Activated CD8-positive, alpha-beta T cell treated with anti-CD3 and anti-CD28 coated beads for 36 hours (primary cell): ENCODE measurements at regions of chr11 and their contacts with region 1.

Region 1: DNA sequence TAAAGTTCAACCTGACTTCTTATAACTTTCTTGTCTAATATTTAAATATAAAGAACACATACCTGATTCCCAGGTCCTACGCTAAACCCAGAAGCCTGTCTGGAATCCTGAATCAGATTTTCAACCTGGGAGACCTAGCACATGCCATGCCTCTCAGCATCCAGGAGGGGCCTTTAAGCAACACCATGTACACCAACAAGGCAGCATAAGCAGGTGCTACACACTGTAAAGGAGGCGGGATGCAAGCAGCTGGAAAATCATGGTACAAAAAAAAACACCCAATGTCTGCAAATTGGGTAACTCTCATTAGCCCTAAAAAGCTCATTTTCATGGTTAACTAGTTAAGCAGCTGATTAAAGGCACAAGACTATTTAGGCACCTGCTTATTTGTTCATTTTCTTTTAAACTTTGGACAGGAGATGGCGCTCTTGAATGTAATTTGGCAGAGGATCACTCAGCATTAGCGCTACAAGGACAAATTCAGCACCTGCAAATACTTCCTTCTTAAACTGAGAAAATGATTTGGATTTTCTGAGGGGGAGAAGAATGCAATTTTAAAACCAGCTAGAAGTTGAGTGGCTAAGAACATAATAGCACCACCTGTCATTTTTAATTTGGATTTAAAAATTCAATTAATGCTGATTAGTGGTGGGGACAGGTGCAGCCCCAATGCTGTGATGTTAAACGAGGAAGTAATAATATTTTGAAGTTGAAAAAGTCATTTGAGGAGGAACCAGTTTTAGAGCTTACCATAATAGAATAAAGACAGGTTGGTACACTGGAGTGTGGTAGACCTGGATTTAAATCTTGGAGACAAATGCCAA is 104.0 kb downstream of the FAR1 start:
- DNase-seq: peak; percentile 8
- ATAC-seq: peak; percentile 65
- H3K4me3 Mint-ChIP-seq: no peak overlapping the region
- H3K27ac Mint-ChIP-seq: no peak overlapping the region
- H3K4me1 Mint-ChIP-seq: no peaks in the 10 kb centered on the region
- H3K27me3 Mint-ChIP-seq: peaks cover 2% of the 10 kb centered on the region
- CTCF ChIP-seq: peak; percentile 75

Region 2: DNA sequence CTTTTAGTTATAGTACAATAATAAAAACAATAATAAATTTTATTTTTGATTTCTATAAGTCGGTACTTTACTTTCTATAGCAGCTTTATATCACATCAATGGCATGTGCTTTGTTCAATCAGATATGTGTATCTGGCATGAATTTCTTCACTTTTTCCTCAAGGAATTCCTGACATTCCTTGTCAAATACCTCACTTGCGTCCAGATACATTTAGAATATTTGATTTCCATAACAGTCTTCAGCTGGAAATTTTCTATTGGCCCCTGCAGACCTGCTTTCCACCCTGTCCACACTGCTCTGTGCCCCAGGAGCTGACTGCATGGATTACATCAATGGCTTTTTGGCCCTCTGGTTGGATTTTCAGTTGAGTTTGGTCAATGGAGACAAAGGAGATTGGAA is 10.7 kb before region 1 on chr11:
- CTCF ChIA-PET with region 1: interaction called, 18 read pairs
- POLR2A ChIA-PET with region 1: no interaction called
- intact Hi-C with region 1: no loop called
- DNase-seq: no peak
- ATAC-seq: no peak
- H3K4me3 Mint-ChIP-seq: no peak overlapping the region
- H3K27ac Mint-ChIP-seq: no peak overlapping the region
- H3K4me1 Mint-ChIP-seq: no peaks in the 10 kb centered on the region
- H3K27me3 Mint-ChIP-seq: no peaks in the 10 kb centered on the region
- CTCF ChIP-seq: no peak

Region 3: DNA sequence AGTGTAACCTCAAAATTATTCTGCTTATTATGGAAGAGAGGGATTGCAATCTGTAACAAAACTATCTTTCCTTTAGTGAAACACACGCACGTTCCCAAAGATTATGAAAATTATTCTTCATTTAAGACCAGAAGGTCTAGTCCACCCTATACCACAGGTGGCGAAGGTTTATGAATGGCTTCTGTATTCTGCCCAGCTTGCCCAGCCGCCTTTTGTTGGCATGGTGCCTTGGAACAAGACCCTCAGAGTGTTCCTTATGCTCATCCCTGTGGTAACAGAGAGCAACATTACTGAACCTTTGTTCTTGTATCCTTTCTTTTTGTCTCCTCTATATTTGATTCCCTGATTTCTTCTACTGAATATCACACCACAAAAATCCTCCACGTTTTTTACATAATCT is 12.4 kb after region 1 on chr11:
- CTCF ChIA-PET with region 1: interaction called, 19 read pairs
- POLR2A ChIA-PET with region 1: no interaction called
- intact Hi-C with region 1: no loop called
- DNase-seq: no peak
- ATAC-seq: no peak
- H3K4me3 Mint-ChIP-seq: no peak overlapping the region
- H3K27ac Mint-ChIP-seq: no peak overlapping the region
- H3K4me1 Mint-ChIP-seq: no peaks in the 10 kb centered on the region
- H3K27me3 Mint-ChIP-seq: no peaks in the 10 kb centered on the region
- CTCF ChIP-seq: no peak

Region 4: GRCh38 chr11:13883042-13883441 is 110.6 kb after region 1 on chr11:
- CTCF ChIA-PET with region 1: no interaction called
- POLR2A ChIA-PET with region 1: no interaction called
- intact Hi-C with region 1: no loop called
- DNase-seq: peak; percentile 42
- ATAC-seq: peak; percentile 65
- H3K4me3 Mint-ChIP-seq: no peak overlapping the region
- H3K27ac Mint-ChIP-seq: no peak overlapping the region
- H3K4me1 Mint-ChIP-seq: peaks cover 1% of the 10 kb centered on the region
- H3K27me3 Mint-ChIP-seq: no peaks in the 10 kb centered on the region
- CTCF ChIP-seq: no peak

Region 5: DNA sequence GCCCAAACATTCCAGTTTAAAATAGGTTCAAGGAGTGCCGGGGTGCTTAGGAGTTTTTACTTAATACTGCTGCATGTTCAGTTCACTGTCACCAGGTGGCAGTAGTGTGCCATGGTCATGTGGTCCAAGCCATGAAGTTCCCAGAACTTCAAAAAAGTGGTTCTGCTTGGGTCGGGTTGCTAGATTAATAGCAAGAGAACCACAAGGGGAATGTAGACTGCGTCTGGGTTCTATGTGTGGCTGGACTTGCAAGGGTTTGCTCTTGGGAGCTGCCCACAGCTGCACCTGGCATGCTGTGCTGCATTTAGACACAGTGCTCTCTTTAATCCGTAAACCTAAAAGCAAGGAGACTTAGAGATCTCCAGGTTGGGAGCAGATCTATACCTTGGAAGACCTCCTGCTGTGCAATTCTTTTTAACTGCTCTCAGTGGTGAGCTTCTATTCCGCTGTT is 183.6 kb after region 1 on chr11:
- CTCF ChIA-PET with region 1: interaction called, 17 read pairs
- POLR2A ChIA-PET with region 1: no interaction called
- intact Hi-C with region 1: loop called (anchors 2 kb)
- DNase-seq: peak; percentile 70
- ATAC-seq: peak; percentile 69
- H3K4me3 Mint-ChIP-seq: no peak overlapping the region
- H3K27ac Mint-ChIP-seq: no peak overlapping the region
- H3K4me1 Mint-ChIP-seq: no peaks in the 10 kb centered on the region
- H3K27me3 Mint-ChIP-seq: peaks cover 8% of the 10 kb centered on the region
- CTCF ChIP-seq: peak; percentile 92

Region 6: DNA sequence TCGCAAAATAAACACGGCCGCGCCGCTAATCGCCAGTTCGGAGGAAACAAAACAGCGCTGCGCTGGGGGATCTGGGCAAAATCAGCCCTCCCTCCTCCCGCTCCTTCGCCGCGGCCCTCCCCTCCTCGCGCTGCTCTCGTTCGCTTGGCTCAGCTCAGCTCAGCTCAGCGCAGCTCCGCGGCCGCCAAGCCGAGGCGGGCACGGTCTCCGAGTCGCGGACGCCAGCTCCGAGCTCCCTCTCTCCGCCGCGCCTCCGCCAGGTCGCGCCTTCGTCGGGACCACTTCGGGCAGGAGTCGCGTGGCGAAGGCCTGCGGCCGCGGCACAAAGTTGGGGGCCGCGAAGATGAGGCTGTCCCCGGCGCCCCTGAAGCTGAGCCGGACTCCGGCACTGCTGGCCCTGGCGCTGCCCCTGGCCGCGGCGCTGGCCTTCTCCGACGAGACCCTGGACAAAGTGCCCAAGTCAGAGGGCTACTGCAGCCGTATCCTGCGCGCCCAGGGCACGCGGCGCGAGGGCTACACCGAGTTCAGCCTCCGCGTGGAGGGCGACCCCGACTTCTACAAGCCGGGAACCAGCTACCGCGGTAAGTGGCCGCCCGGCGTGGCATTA is 190.2 kb after region 1 on chr11 and contains the start of gene SPON1:
- CTCF ChIA-PET with region 1: interaction called, 16 read pairs
- POLR2A ChIA-PET with region 1: no interaction called
- intact Hi-C with region 1: no loop called
- DNase-seq: peak; percentile 63
- ATAC-seq: peak; percentile 83
- H3K4me3 Mint-ChIP-seq: peak within 1 kb of the TSS; percentile 65
- H3K27ac Mint-ChIP-seq: no peak within 1 kb of the TSS
- H3K4me1 Mint-ChIP-seq: peaks cover 8% of the 10 kb centered on the region
- H3K27me3 Mint-ChIP-seq: peaks cover 41% of the 10 kb centered on the region
- CTCF ChIP-seq: no peak
- total RNA-seq, gene SPON1: 0.96 to 1.4 TPM

Region 7: DNA sequence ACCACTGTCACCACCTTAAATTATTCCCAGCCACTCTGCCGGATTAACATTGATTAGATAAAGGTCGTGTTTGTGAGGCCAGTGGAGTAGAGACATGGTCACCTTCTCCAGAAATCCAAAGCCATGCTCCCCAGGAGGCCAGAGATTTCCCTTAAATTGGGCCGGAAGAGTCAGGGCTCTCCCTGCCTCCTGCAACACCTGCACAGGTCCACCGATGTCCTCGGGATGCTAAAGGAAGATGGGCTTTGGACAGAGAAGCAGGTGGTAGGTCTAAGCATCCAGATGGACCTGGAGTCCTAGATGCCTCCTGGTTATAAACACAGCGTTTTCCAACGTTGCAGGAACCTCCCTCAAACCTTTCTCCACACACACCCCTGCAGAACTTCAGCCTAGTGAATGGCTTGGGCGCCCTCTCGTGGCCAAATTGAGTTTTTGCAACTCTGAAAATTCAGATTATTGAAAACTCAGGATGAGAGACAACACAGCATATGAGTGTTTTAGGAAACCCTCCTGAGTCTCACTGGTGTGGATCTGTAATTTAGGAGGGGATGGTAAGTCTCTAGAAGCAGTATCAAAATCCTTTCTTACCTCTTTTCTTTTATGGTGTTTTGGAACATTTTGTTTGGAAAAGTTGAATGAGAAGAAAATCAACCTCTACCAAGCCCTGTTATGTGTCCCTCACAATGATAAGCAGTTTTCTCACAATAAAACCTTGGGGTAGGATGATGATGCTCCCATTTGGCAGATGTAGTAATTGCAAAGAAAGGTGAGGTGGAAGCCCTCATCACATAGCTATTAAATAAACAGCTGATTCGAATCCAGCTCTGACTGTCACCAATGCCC is 476.9 kb after region 1 on chr11:
- CTCF ChIA-PET with region 1: interaction called, 16 read pairs
- POLR2A ChIA-PET with region 1: no interaction called
- intact Hi-C with region 1: loop called (anchors 5 kb)
- DNase-seq: peak; percentile 75
- ATAC-seq: peak; percentile 68
- H3K4me3 Mint-ChIP-seq: no peak overlapping the region
- H3K27ac Mint-ChIP-seq: no peak overlapping the region
- H3K4me1 Mint-ChIP-seq: peaks cover 19% of the 10 kb centered on the region
- H3K27me3 Mint-ChIP-seq: no peaks in the 10 kb centered on the region
- CTCF ChIP-seq: peak; percentile 97